ENCODE measurements at regions of chr2 and their contacts with region 1.

Region 1: DNA sequence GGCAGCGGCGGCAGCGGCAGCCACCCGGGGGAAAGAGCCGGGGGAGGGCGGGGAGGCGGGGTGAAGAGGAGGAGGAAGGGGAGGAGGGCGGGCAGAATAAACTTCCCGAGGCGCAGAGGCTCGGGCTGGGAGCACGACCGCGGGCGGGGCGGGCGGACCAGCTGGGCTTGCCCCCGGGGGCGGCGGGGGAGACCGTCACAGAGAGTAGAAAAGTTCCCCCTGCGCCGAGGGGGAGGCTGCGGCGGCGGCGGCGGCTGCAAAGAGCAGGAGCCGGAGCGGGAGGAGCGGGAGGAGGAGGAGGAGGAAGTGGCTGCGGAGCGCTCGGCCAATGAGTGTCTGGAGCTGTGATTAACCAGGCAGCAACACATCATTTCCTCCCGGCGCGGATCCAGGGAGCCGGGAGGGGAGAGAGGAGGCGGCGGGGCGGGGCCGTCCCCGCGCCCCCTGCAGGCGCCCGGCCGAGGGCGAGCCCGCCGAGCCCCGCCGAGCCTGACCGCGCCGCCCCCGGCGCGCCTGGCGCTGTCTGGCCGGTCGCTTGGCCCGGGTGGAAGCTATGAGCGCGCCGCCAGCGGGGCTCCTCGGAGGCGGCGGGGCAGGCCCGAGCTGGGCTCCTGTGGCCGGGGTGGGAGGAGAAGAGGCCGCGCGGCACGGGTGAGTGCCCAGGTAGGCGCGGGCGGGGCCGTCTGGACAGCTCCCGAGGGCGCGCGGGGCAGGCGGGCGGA is at the start of gene ACVR1:
- DNase-seq: peak; percentile 96 to 97 (median 97)
- ATAC-seq: peak; percentile 95 to 98 (median 96)
- H3K4me3 ChIP-seq: peak within 1 kb of the TSS; percentile 46 to 97 (median 86)
- H3K27ac ChIP-seq: peak within 1 kb of the TSS; percentile 92 to 100 (median 96)
- H3K4me1 ChIP-seq: peaks cover 0 to 44% (median 25%) of the 10 kb centered on the region in 12 donors
- H3K27me3 ChIP-seq: no peaks in the 10 kb centered on the region
- CTCF ChIP-seq: peak in 11 of 12 donors; percentile 22 to 66 (median 36)
- POLR2A ChIP-seq: peak in 1 of 2 donors; percentile 67
- total RNA-seq, gene ACVR1: 15.3 to 37.6 (median 23.9) TPM

Region 2: DNA sequence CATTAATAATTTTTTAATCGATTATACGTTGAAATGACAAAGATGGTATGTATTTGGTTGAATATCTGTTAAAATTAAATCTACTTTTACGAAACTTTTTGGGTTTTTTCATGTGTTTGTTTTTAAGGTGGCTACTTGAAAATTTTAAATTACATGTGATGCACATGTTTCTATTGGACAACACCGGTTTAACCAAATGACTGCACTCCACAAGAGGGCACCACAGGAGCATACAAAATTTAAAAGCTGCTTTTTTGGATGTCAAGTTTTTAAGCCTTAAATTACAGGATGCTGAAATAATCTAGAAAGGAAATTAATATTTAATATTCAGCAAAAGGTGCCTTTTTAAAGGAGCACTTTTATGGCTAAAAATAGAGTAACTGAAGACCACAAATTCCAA is 98.8 kb before region 1 on chr2:
- intact Hi-C with region 1: loop called in 5 of 10 experiments (anchors 2 to 10 kb)
- DNase-seq: peak in 1 of 5 donors; percentile 32
- ATAC-seq: no peak
- H3K4me3 ChIP-seq: no peak overlapping the region
- H3K27ac ChIP-seq: no peak overlapping the region
- H3K4me1 ChIP-seq: peaks cover 0 to 13% (median 9%) of the 10 kb centered on the region in 12 donors
- H3K27me3 ChIP-seq: no peaks in the 10 kb centered on the region
- CTCF ChIP-seq: peak; percentile 52 to 83 (median 73)
- POLR2A ChIP-seq: no peak

Region 3: GRCh38 chr2:157784169-157784822 is 91.9 kb before region 1 on chr2:
- intact Hi-C with region 1: loop called in 9 of 10 experiments (anchors 1 to 10 kb)
- DNase-seq: peak; percentile 36 to 61 (median 57)
- ATAC-seq: peak; percentile 70 to 80 (median 76)
- H3K4me3 ChIP-seq: peak overlapping the region in 2 of 12 donors; percentile 14 to 24
- H3K27ac ChIP-seq: peak overlapping the region; percentile 38 to 79 (median 58)
- H3K4me1 ChIP-seq: peaks cover 5 to 82% (median 61%) of the 10 kb centered on the region in 12 donors
- H3K27me3 ChIP-seq: no peaks in the 10 kb centered on the region
- CTCF ChIP-seq: no peak
- POLR2A ChIP-seq: no peak

Region 4: GRCh38 chr2:157789933-157790511 is 86.2 kb before region 1 on chr2:
- intact Hi-C with region 1: loop called in 7 of 10 experiments (anchors 1 to 10 kb)
- DNase-seq: peak; percentile 42 to 85 (median 70)
- ATAC-seq: peak; percentile 93 to 96 (median 96)
- H3K4me3 ChIP-seq: no peak overlapping the region
- H3K27ac ChIP-seq: peak overlapping the region; percentile 24 to 87 (median 73)
- H3K4me1 ChIP-seq: peaks cover 8 to 73% (median 56%) of the 10 kb centered on the region in 12 donors
- H3K27me3 ChIP-seq: no peaks in the 10 kb centered on the region
- CTCF ChIP-seq: no peak
- POLR2A ChIP-seq: no peak

Region 5: GRCh38 chr2:157830696-157831570 is 45.3 kb before region 1 on chr2:
- intact Hi-C with region 1: loop called in 2 of 10 experiments (anchors 2 to 5 kb)
- DNase-seq: no peak
- ATAC-seq: peak; percentile 45 to 87 (median 76)
- H3K4me3 ChIP-seq: no peak overlapping the region
- H3K27ac ChIP-seq: peak overlapping the region; percentile 12 to 78 (median 60)
- H3K4me1 ChIP-seq: peaks cover 5 to 35% (median 23%) of the 10 kb centered on the region in 12 donors
- H3K27me3 ChIP-seq: no peaks in the 10 kb centered on the region
- CTCF ChIP-seq: no peak
- POLR2A ChIP-seq: no peak

Region 6: GRCh38 chr2:157838442-157839161 is 37.6 kb before region 1 on chr2:
- intact Hi-C with region 1: loop called in 6 of 10 experiments (anchors 1 to 5 kb)
- DNase-seq: peak; percentile 48 to 66 (median 50)
- ATAC-seq: peak; percentile 44 to 82 (median 78)
- H3K4me3 ChIP-seq: peak overlapping the region in 10 of 12 donors; percentile 10 to 52 (median 41)
- H3K27ac ChIP-seq: peak overlapping the region; percentile 11 to 93 (median 79)
- H3K4me1 ChIP-seq: peaks cover 23 to 80% (median 67%) of the 10 kb centered on the region in 12 donors
- H3K27me3 ChIP-seq: no peaks in the 10 kb centered on the region
- CTCF ChIP-seq: no peak
- POLR2A ChIP-seq: no peak